Calu3 (cell line): ENCODE measurements at regions of chr18 and their contacts with region 1.

Region 1: GRCh38 chr18:27549335-27550039 is 364.4 kb upstream of the CHST9 start:
- DNase-seq: no peak
- H3K4me3 Mint-ChIP-seq: no peak overlapping the region
- H3K27ac Mint-ChIP-seq: no peak overlapping the region
- H3K4me1 Mint-ChIP-seq: peaks cover under 1% of the 10 kb centered on the region
- H3K27me3 Mint-ChIP-seq: no peaks in the 10 kb centered on the region
- CTCF ChIP-seq: no peak

Region 2: GRCh38 chr18:27198036-27198435 is 351.5 kb before region 1 on chr18:
- CTCF ChIA-PET with region 1: no interaction called
- intact Hi-C with region 1: no loop called
- DNase-seq: no peak
- H3K4me3 Mint-ChIP-seq: no peak overlapping the region
- H3K27ac Mint-ChIP-seq: no peak overlapping the region
- H3K4me1 Mint-ChIP-seq: peaks cover 14% of the 10 kb centered on the region
- H3K27me3 Mint-ChIP-seq: no peaks in the 10 kb centered on the region
- CTCF ChIP-seq: no peak

Region 3: GRCh38 chr18:27501671-27502070 is 47.8 kb before region 1 on chr18:
- CTCF ChIA-PET with region 1: no interaction called
- intact Hi-C with region 1: no loop called
- DNase-seq: no peak
- H3K4me3 Mint-ChIP-seq: no peak overlapping the region
- H3K27ac Mint-ChIP-seq: no peak overlapping the region
- H3K4me1 Mint-ChIP-seq: no peaks in the 10 kb centered on the region
- H3K27me3 Mint-ChIP-seq: no peaks in the 10 kb centered on the region
- CTCF ChIP-seq: no peak

Region 4: GRCh38 chr18:28313602-28314001 is 764.1 kb after region 1 on chr18:
- CTCF ChIA-PET with region 1: interaction called, 11 read pairs
- intact Hi-C with region 1: no loop called
- DNase-seq: no peak
- H3K4me3 Mint-ChIP-seq: no peak overlapping the region
- H3K27ac Mint-ChIP-seq: no peak overlapping the region
- H3K4me1 Mint-ChIP-seq: no peaks in the 10 kb centered on the region
- H3K27me3 Mint-ChIP-seq: no peaks in the 10 kb centered on the region
- CTCF ChIP-seq: no peak